ENCODE measurements at regions of chr1 and their contacts with region 1.

Region 1: DNA sequence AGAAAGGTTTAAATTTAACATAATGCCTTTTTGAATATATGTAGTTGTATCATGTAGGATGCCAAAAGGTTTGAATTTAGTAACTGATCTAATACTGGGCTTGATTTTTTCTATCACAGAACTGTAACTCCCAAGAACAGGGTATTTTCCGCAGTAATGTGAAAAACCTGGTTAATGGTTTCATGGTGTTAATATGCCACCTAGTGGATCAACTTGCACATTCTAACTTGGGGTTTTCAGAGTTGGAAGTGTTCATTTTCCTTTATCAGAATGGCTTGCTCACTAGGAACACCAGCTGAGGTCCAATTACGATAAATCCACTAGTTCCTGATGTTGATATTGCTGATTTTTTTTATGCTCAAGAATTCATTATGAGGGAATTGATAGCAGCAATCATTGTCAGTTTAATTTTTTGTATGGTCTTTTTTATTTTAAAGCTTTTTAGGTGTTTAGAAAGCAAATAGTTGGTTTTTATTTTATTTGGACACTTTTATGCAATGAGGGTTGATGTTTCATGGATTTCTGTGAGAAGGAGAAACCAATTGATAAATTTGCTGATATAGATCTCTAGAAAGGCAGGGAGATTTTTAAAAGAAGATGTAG is 157.2 kb downstream of the PLA2G4A start:
- DNase-seq: no peak
- ATAC-seq: peak; percentile 83
- H3K4me3 ChIP-seq: no peak overlapping the region
- H3K27ac ChIP-seq: no peak overlapping the region
- H3K4me1 ChIP-seq: no peaks in the 10 kb centered on the region
- H3K27me3 ChIP-seq: no peaks in the 10 kb centered on the region
- CTCF ChIP-seq: peak; percentile 43 to 83 (median 68); a peak in 5 of 6 replicates
- EP300 ChIP-seq: no peak
- POLR2A ChIP-seq: no peak
- RAD21 ChIP-seq: peak; percentile 97

Region 2: DNA sequence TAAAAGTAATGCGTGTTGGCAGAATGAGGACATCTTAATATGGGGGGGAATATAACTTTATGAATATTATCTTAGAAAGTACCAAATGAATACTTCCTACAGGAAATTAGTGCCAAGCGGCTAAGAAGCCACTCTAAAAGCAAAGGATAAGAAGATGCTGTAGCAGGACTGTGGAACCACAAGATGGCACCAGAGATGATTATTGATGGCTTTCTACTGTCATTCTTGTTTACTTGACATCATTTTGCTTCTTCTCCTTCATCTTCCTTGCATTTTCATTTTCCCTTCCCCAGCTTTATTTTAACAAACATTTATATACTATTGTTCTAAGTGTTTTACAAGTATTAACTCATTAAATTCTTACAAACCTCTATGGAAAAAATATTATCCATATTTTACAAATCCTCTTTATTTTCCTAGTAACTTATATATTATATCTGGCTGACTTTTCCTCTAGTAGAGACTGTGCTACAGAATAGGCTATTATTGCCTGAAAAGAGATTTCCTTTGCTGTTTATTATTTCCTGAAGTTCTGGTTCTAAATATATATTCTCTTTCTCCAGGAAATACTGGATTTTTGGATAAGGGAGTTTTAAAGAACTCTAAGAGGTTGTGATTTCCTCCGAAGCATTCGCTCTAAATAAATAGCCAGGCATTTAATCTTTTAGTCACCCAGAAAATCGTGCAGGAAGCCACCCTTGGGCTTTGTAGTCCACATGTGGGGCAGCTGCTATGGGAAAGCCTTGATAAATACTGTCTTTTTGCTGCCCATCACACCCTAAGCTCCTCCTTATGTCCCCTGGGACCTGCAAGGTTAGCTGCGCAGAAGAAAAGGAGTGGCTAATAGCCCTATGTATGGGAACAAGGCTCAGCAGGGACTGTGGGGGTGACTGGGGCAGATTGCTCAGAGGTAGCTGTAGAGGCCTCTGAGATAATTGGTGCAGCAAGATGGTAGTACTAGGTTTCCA is 680.7 kb before region 1 on chr1:
- CTCF ChIA-PET with region 1: interaction called, 3 read pairs
- POLR2A ChIA-PET with region 1: no interaction called
- RAD21 ChIA-PET with region 1: no interaction called
- SMC1A ChIA-PET with region 1: no interaction called
- in situ Hi-C with region 1: no loop called
- intact Hi-C with region 1: loop called (anchors 10 kb)
- DNase-seq: no peak
- ATAC-seq: peak; percentile 90
- H3K4me3 ChIP-seq: no peak overlapping the region
- H3K27ac ChIP-seq: no peak overlapping the region
- H3K4me1 ChIP-seq: no peaks in the 10 kb centered on the region
- H3K27me3 ChIP-seq: no peaks in the 10 kb centered on the region
- CTCF ChIP-seq: peak; percentile 47 to 63 (median 59)
- EP300 ChIP-seq: no peak
- POLR2A ChIP-seq: no peak
- RAD21 ChIP-seq: 0 out of 2 replicates have a peak, but pooled peaks have one; percentile 22

Region 3: DNA sequence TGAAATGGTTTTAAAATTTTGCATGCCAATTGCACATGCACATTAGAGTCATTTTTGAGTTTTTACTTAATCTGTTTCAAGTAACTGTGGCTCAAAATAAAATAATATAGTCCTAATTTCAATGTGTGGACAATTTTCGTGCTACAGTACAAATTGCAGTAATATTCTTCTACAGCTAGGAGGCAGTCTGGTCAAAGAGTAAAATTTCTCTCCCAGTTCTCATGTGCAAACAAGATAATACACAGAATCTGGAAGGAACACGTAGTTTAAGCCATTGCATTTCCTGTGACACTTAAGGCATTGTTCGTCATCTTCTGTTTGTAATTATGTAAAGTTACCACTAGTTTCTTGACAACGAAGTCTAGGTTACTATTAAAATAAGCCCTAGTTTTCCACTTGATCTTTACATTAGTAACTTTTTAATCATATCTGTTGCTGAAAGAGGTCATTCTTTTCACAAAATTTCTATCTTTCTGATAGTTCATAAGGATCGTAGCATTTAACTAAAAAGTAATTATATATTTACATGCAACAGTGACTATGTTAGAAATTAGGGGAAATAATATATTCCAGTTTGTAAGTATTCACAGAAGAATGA is 581.4 kb before region 1 on chr1:
- CTCF ChIA-PET with region 1: interaction called, 11 read pairs
- POLR2A ChIA-PET with region 1: no interaction called
- RAD21 ChIA-PET with region 1: interaction called, 4 read pairs
- SMC1A ChIA-PET with region 1: interaction called, 4 read pairs
- in situ Hi-C with region 1: loop called (anchors 10 kb)
- intact Hi-C with region 1: loop called (anchors 1 kb)
- DNase-seq: no peak
- ATAC-seq: peak; percentile 72
- H3K4me3 ChIP-seq: no peak overlapping the region
- H3K27ac ChIP-seq: no peak overlapping the region
- H3K4me1 ChIP-seq: no peaks in the 10 kb centered on the region
- H3K27me3 ChIP-seq: no peaks in the 10 kb centered on the region
- CTCF ChIP-seq: peak; percentile 58 to 65 (median 60)
- EP300 ChIP-seq: no peak
- POLR2A ChIP-seq: no peak
- RAD21 ChIP-seq: peak; percentile 72

Region 4: GRCh38 chr1:186605762-186606350 is 380.1 kb before region 1 on chr1:
- CTCF ChIA-PET with region 1: interaction called, 14 read pairs
- POLR2A ChIA-PET with region 1: no interaction called
- RAD21 ChIA-PET with region 1: interaction called, 14 read pairs
- SMC1A ChIA-PET with region 1: interaction called, 25 read pairs
- in situ Hi-C with region 1: loop called (anchors 5 kb)
- intact Hi-C with region 1: loop called (anchors 1 kb)
- DNase-seq: no peak
- ATAC-seq: peak; percentile 89
- H3K4me3 ChIP-seq: no peak overlapping the region
- H3K27ac ChIP-seq: no peak overlapping the region
- H3K4me1 ChIP-seq: no peaks in the 10 kb centered on the region
- H3K27me3 ChIP-seq: no peaks in the 10 kb centered on the region; a peak in 1 of 4 replicates
- CTCF ChIP-seq: peak; percentile 66 to 83 (median 70)
- EP300 ChIP-seq: no peak
- POLR2A ChIP-seq: no peak
- RAD21 ChIP-seq: peak; percentile 92

Region 5: DNA sequence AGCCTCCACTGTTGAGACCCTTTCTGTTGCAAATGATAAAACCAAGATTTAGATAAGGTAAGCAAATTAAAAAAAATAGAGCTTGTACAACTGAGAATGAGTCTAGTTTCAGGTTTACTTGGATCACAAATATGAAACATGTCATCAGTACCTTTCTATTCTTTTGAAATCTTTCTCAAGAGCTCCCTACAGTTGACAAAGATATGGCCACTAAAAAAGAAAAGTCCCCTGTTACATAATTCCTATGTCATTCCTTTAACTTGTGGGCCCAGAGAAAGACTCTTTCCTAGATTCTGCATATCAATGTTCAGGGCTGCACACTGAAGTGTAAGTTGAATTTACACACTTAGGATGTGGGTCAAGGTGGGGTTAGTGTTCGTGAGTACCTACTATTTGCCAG is 10.8 kb after region 1 on chr1:
- CTCF ChIA-PET with region 1: interaction called, 5 read pairs
- POLR2A ChIA-PET with region 1: no interaction called
- RAD21 ChIA-PET with region 1: no interaction called
- SMC1A ChIA-PET with region 1: interaction called, 12 read pairs
- in situ Hi-C with region 1: no loop called
- intact Hi-C with region 1: no loop called
- DNase-seq: no peak
- ATAC-seq: no peak; the same call in 2 of the 3 replicates
- H3K4me3 ChIP-seq: no peak overlapping the region
- H3K27ac ChIP-seq: no peak overlapping the region
- H3K4me1 ChIP-seq: no peaks in the 10 kb centered on the region
- H3K27me3 ChIP-seq: no peaks in the 10 kb centered on the region
- CTCF ChIP-seq: no peak
- EP300 ChIP-seq: no peak
- POLR2A ChIP-seq: no peak
- RAD21 ChIP-seq: no peak

Measured in GM12878 (cell line).